BJ (cell line): ENCODE measurements at regions of chrX and their contacts with region 1.

Region 1: DNA sequence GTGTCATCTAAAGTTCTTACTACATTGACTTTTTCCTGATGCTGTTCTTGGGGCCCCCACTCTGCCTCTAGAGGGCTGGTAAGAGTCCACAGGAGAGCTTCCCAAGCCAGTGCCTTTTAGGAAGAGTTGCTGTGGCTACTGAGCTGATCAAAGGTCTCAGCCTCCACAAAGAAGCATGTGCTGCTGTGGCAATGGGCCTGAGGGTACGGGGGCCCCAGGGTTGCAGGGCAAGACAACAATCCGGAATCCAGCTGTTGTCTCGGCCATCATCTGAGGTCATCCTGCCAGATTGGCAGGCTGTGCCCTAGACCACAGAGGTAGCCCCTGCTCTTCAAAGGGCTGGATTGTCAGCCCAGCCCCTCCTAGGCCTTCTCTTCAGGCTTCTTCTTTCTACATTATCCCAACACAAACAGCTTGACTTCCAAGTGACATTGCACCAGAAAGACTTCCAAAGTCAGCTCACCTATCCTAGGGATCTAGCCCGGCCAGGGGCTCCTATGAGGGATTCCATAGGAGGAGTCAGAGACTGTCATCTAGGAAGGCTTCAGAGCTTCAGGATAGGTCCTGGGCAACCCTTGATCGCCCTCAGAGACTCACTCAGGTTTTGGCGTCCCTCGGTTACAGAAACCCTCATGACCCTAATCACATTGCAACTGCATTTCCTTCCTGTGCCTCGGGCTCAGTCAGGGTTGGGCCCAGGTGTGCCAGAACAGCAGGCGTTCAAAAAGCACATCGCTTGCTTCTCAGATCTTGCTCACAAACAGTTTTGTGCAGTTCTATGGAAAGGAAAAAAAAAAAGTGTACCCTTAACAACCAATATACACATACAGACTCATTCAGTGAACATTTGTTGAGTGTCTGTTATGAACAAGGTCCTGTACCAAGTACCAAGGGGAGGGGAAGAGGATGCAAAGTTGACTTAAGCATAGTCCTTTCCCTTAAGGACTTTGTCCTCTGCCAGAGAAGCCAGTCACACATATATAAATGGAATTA is 27.8 kb downstream of the SLC25A5 start:
- DNase-seq: no peak
- H3K4me3 ChIP-seq: no peak overlapping the region
- H3K27me3 ChIP-seq: no peaks in the 10 kb centered on the region
- CTCF ChIP-seq: no peak

Region 2: DNA sequence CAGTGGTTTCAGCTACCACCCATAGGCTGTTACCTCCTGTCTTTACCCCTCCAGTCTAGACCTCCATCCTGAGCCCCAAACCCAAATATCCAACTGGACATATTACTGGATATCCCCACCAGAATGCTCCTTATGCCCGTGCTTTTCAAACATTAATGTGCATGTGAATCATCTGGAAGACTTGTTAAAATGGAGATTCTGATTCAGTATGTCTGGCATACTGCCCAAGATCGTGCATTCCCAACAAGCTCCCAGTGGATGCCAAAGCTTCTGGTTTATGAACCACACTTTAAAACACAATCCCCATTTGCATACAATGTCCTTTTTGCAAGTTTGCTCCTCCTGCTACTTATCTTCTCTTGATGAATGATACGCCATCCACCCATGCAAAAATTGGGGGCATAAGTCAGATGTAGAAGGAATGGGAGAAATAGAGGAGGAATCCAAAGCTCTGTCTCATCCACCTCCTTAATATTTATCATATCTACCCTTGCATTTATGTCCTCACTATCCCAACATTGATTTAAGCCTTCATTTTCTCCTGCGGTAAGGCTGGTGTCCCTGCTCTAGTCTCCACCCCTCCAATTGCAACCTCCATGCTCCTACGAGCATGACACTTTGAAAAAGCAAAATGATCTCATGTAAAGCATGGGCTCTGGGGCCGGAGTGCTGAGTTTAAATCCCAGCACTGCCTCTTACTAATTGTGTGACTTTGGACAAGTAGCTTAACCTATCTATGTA is 267.3 kb before region 1 on chrX:
- CTCF ChIA-PET with region 1: no interaction called
- POLR2A ChIA-PET with region 1: interaction called, 16 read pairs
- DNase-seq: peak; percentile 73
- H3K4me3 ChIP-seq: no peak overlapping the region
- H3K27me3 ChIP-seq: no peaks in the 10 kb centered on the region
- CTCF ChIP-seq: no peak

Region 3: GRCh38 chrX:119273420-119274192 is 222.4 kb before region 1 on chrX:
- CTCF ChIA-PET with region 1: no interaction called
- POLR2A ChIA-PET with region 1: no interaction called
- DNase-seq: no peak
- H3K4me3 ChIP-seq: no peak overlapping the region
- H3K27me3 ChIP-seq: no peaks in the 10 kb centered on the region; the same call in 1 of the 2 replicates
- CTCF ChIP-seq: peak; percentile 31

Region 4: DNA sequence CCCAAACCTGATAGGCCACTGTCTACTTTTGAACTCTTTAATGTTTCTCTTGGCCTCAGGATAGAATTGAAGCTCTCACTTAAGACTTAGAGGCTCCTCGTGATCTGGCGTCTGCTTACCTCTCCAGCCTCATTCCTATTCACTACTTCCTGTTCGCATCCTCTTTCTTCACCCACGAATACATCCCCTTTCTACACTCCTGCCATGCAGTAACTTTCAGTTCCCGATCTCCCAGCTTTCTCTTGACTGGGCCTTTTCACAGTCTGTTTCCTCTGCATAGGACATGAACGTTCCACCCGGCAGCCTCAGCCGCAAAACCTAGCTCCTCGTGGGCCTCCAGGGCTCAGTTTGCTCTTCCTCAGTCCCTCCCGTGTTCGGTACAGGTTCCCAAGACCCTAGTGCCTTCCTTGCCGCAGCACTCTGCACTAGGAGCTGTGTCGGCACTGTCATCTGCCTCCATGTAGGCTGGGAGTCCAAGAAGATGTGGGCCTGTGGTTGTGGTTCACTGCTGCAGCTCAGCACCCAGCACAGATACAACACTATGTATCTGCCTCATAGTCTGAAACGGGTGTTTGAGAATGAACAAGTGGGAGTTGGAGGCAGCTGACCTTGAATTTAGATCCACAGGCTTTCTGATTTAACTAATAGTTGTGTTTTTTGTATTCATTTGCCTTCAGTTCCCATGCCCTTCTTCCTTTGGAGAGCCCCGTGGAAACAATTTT is 279.6 kb after region 1 on chrX:
- CTCF ChIA-PET with region 1: no interaction called
- POLR2A ChIA-PET with region 1: no interaction called
- DNase-seq: no peak
- H3K4me3 ChIP-seq: no peak overlapping the region
- H3K27me3 ChIP-seq: no peaks in the 10 kb centered on the region
- CTCF ChIP-seq: no peak